H1 (cell line): ENCODE measurements at regions of chr1 and their contacts with region 1.

Region 1: GRCh38 chr1:202274611-202275010 is 67.1 kb downstream of the UBE2T start:
- DNase-seq: no peak
- H3K4me3 ChIP-seq: no peak overlapping the region
- H3K27ac ChIP-seq: no peak overlapping the region
- H3K4me1 ChIP-seq: no peaks in the 10 kb centered on the region
- H3K27me3 ChIP-seq: no peaks in the 10 kb centered on the region
- CTCF ChIP-seq: peak; percentile 66
- EP300 ChIP-seq: no peak
- POLR2A ChIP-seq: no peak
- RAD21 ChIP-seq: peak; percentile 56 to 73

Region 2: DNA sequence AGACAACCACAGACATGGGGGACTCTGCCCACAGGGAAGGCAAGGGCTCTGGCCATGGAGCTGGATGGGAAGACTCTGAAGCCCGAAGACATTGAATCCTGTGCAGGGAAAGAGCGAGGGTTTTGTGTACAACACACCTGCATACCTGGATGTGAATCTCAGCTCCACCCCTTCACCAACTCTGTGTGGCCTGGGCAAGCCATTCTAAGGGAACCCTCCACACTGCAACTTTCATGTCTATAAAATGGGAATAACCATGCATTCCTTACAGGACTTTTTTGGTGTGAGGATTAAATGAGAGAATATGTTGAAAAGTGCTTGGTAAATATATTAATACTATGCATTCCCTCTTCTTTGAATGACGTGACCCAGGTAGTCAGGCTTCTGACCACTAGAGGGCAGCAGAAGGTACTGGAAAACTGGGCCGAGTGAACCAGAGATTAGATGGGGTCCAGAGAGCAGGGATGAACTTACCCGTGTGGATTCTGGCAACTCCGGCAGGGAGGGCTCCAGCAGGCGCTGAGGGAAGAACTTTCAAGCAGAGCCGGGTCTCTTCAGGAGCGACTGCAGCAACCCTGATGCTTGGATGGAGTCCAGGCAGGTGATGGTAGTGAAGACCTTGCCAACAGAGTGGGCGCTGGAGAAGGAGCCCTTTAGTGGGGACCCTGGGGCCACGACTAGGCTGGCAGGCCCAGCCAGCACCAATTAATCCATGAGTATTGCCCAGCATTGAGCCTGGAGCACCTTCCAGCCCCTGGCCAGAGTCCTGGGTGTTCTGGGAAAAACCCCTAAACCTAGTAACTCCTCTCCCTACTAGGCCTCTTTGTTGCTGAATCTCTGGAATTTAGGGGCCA is 265.1 kb before region 1 on chr1:
- CTCF ChIA-PET with region 1: no interaction called
- POLR2A ChIA-PET with region 1: no interaction called
- DNase-seq: peak; percentile 38 to 87
- H3K4me3 ChIP-seq: peak overlapping the region in 3 of 4 experiments; percentile 17 to 72 (median 30); a peak in 6 of 8 replicates
- H3K27ac ChIP-seq: peak overlapping the region; percentile 78
- H3K4me1 ChIP-seq: peaks cover 12 to 39% (median 31%) of the 10 kb centered on the region in 4 experiments
- H3K27me3 ChIP-seq: no peaks in the 10 kb centered on the region
- CTCF ChIP-seq: peak in 2 of 3 experiments; percentile 73 to 82; a peak in 3 of 4 replicates
- EP300 ChIP-seq: no peak
- POLR2A ChIP-seq: no peak
- RAD21 ChIP-seq: peak; percentile 80 to 90

Region 3: DNA sequence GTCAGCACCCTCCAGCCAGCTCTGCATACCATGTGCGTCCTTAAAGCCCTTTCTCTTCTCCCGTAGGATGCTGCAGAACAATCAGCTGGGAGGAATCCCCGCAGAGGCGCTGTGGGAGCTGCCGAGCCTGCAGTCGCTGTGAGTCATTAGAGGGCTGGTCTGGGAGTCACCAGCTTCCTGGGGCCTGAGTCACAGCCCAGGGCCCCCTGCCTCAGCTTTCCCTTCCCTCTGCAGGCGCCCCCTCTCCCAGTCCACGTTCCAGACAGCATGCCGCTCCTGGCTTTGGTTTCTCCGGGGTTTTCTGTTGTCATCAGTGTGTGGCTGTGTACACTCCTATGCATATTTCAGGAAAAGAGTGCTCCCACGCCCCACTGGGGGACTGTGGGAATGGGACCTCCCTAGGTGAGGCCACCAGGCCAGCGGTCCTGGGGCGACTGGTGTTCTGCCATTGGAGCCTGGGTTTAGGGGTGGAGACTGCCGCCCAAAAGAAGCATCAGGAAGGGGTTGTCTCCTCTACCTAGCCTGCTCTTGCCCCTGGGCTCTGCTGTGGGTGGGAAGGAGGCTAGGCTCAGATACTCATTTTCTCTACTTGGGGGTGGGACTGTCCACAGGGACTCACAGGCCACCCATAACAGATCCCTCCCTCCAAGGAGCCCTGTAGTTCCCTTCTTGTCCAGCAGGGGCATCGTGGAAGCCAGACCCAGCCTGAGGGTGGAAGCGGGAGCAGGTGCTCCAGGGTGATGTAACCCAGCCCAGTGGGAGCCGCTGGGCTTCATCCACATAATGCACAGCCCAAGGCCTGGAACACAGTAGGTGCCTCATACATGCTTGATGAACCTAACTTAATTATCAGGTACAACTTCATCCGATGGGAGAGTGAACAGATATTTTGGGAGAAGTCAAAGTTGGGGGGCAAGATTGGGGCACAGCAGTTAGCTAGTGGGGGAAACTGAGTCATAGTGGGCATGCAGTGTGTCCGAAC is 38.5 kb before region 1 on chr1:
- CTCF ChIA-PET with region 1: interaction called, 18 read pairs
- POLR2A ChIA-PET with region 1: no interaction called
- DNase-seq: peak; percentile 81 to 97
- H3K4me3 ChIP-seq: no peak overlapping the region
- H3K27ac ChIP-seq: no peak overlapping the region
- H3K4me1 ChIP-seq: peaks cover 0 to 18% (median 10%) of the 10 kb centered on the region in 4 experiments; a peak in 6 of 7 replicates
- H3K27me3 ChIP-seq: no peaks in the 10 kb centered on the region
- CTCF ChIP-seq: peak; percentile 81 to 97 (median 97)
- EP300 ChIP-seq: no peak; a peak in 1 of 3 replicates
- POLR2A ChIP-seq: no peak
- RAD21 ChIP-seq: peak; percentile 37 to 57; a peak in 3 of 4 replicates

Region 4: DNA sequence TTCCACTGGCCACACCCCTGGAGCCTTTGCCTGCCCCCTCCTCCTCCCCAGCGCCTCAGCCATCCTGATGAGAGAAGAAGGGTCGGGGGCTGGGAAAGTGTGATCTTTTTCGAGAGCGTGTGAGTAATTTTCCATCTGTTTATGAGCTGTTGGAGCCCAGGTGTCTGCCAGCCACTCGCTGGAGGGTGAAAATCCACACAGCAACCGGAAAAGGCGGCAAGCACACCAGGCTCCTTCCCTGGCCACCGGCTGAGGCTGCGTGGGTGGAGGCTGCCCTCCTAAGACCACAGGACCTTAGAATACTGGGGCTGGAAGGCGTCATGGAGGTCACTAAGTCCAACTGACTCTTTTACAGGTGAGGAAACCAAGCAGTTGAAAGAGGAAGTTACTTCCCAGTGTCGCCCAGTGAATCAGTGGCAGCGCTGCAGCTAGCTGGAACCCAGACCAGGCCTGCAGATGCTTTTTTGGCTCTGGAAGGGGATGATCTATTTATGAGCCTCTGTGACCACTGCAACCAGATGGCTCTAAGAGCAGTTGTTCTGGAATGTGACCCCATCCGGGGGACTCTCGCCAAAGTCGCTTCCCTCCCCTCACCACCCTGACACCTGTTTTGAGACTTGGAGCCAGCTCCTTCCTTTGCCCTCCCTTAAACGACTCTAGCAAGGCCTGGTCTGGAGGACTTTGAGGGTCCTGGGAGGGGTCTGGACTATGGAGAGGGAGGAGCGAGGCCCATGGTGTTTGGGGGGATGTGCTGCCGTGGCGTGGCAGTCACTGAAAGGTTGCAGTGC is 26.5 kb before region 1 on chr1:
- CTCF ChIA-PET with region 1: interaction called, 15 read pairs
- POLR2A ChIA-PET with region 1: interaction called, 3 read pairs
- DNase-seq: no peak
- H3K4me3 ChIP-seq: no peak overlapping the region
- H3K27ac ChIP-seq: no peak overlapping the region
- H3K4me1 ChIP-seq: peaks cover 4 to 6% (median 5%) of the 10 kb centered on the region in 4 experiments
- H3K27me3 ChIP-seq: no peaks in the 10 kb centered on the region; a peak in 2 of 7 replicates
- CTCF ChIP-seq: no peak
- EP300 ChIP-seq: no peak
- POLR2A ChIP-seq: no peak
- RAD21 ChIP-seq: no peak

Region 5: GRCh38 chr1:202291961-202292712 is 17.5 kb after region 1 on chr1:
- CTCF ChIA-PET with region 1: interaction called, 11 read pairs
- POLR2A ChIA-PET with region 1: no interaction called
- DNase-seq: no peak
- H3K4me3 ChIP-seq: no peak overlapping the region
- H3K27ac ChIP-seq: no peak overlapping the region
- H3K4me1 ChIP-seq: no peaks in the 10 kb centered on the region
- H3K27me3 ChIP-seq: no peaks in the 10 kb centered on the region
- CTCF ChIP-seq: no peak
- EP300 ChIP-seq: no peak
- POLR2A ChIP-seq: no peak
- RAD21 ChIP-seq: no peak

Region 6: DNA sequence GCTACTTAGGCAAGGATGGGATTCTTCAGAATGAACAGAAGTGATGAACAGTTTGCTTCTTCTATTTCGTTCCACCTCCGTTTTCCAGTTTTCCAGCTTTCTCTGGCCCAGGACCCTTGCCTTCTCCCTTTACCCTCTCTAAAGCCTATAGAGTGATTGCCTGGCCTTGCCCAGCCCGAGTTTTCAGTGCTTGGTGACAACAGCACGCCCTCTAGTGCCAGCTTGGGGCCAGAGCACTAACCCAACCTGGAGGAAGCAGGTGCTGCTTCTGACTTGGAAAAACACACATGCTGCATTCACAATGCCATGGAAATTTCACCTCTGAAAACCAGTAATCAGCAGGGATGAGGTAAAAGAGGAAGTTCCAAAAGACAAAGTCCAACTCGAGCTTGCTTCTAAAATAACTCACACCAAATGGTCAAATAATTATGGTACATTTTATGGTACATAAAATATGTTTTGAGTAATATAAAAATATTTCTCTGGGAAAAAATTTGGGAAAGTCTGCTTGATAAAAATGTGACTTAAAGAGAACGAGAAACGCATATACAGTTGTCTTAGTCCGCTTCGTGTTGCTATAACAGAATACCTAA is 41.1 kb after region 1 on chr1:
- CTCF ChIA-PET with region 1: interaction called, 35 read pairs
- POLR2A ChIA-PET with region 1: interaction called, 3 read pairs
- DNase-seq: peak; percentile 49 to 90
- H3K4me3 ChIP-seq: no peak overlapping the region
- H3K27ac ChIP-seq: no peak overlapping the region
- H3K4me1 ChIP-seq: peaks cover 0 to 6% (median 1%) of the 10 kb centered on the region in 4 experiments; a peak in 3 of 7 replicates
- H3K27me3 ChIP-seq: no peaks in the 10 kb centered on the region; a peak in 1 of 7 replicates
- CTCF ChIP-seq: peak; percentile 98
- EP300 ChIP-seq: no peak
- POLR2A ChIP-seq: no peak
- RAD21 ChIP-seq: peak; percentile 97 to 98